Activated CD4-positive, alpha-beta memory T cell treated with anti-CD3 and anti-CD28 coated beads for 36 hours (primary cell): ENCODE measurements at regions of chr20 and their contacts with region 1.

Region 1: GRCh38 chr20:32535953-32536823 is 48.9 kb downstream of the NOL4L start:
- DNase-seq: peak; percentile 84
- H3K4me3 Mint-ChIP-seq: peak overlapping the region; percentile 72
- H3K27ac Mint-ChIP-seq: peak overlapping the region; percentile 89
- H3K4me1 Mint-ChIP-seq: peaks cover 74% of the 10 kb centered on the region
- H3K27me3 Mint-ChIP-seq: no peaks in the 10 kb centered on the region

Region 2: DNA sequence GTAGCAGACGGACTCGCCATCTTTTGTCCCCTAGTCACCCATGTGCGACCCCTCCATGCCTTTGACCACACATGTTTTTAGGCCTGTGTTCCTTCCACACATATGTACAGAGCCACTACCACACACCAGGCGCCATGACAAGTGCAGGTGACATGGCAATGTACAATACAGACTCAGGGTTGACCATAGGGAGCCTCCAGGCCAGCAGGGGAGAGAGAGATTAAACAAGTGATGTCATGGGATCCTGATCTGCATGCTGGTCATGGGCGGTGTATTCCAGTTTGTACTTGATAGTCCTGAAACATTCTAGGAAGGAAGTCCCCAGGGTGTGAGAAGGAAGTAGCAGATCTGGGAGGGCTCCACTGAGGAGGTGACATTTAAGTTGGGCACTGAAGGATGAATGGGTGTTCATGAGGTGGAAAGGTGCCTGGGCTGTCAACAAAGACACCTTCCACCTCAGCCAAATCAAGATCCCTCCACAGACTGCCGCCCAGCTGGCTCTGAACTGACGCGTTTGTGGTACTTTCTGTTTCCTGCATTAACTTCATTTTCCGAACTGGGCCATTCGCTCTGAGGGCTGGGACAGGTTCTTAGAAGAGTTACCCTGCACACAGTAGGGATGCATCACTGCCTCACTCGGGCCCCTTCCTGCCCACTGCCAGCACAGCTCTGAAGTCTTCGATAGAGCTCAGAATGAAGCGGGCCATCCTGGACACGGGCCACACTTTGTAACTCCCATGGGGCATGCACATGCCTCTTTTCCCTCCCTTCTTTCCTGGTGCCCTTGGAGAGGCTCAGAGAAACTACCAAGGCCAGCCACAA is 45.0 kb before region 1 on chr20:
- CTCF ChIA-PET with region 1: no interaction called
- POLR2A ChIA-PET with region 1: no interaction called
- intact Hi-C with region 1: no loop called
- DNase-seq: no peak
- H3K4me3 Mint-ChIP-seq: no peak overlapping the region
- H3K27ac Mint-ChIP-seq: no peak overlapping the region
- H3K4me1 Mint-ChIP-seq: peaks cover 10% of the 10 kb centered on the region
- H3K27me3 Mint-ChIP-seq: no peaks in the 10 kb centered on the region

Region 3: DNA sequence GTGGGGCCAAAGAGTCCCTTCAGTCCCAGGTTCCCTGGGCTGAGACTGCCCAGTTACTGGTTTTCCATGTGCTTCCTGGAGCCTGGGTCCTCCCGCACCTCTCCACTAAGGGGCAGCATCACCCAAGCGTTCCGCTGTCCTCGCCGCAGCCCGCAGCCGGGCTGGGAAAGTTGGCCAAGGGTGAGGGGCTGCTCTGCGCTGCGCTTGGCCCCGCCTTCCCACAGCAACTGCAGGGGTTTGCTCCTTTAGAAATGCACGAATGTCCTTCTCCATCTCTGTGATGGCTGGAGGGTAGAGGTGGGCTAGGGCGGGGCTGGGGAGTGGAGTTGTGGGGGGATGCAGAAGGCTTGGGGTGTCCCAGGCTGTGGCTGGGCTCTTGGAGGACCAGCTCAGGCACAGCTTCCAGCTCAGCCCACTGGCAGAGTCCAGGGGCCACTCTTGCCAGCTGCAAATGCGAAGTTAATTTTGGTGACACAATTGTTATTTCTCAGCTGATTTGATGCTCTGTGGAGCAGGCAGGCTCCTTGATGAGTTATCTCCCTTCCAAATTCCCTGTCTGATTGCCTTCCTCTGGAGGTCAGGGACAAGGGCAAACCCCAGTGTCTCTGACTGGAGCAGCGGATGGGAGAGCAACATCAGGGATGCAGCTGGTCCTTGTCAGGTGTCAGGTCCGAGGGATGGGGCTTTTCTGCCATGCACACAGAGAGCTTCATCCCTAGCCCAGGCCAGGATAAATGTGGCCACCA is 14.2 kb before region 1 on chr20:
- CTCF ChIA-PET with region 1: interaction called, 74 read pairs
- POLR2A ChIA-PET with region 1: interaction called, 6 read pairs
- intact Hi-C with region 1: loop called (anchors 2 kb)
- DNase-seq: peak; percentile 78
- H3K4me3 Mint-ChIP-seq: no peak overlapping the region
- H3K27ac Mint-ChIP-seq: peak overlapping the region; percentile 58
- H3K4me1 Mint-ChIP-seq: peaks cover 47% of the 10 kb centered on the region
- H3K27me3 Mint-ChIP-seq: no peaks in the 10 kb centered on the region

Region 4: GRCh38 chr20:32553618-32554017 is 17.4 kb after region 1 on chr20:
- CTCF ChIA-PET with region 1: interaction called, 4 read pairs
- POLR2A ChIA-PET with region 1: interaction called, 4 read pairs
- intact Hi-C with region 1: loop called (anchors 2 kb)
- DNase-seq: no peak
- H3K4me3 Mint-ChIP-seq: no peak overlapping the region
- H3K27ac Mint-ChIP-seq: peak overlapping the region; percentile 64
- H3K4me1 Mint-ChIP-seq: peaks cover 60% of the 10 kb centered on the region
- H3K27me3 Mint-ChIP-seq: no peaks in the 10 kb centered on the region

Region 5: DNA sequence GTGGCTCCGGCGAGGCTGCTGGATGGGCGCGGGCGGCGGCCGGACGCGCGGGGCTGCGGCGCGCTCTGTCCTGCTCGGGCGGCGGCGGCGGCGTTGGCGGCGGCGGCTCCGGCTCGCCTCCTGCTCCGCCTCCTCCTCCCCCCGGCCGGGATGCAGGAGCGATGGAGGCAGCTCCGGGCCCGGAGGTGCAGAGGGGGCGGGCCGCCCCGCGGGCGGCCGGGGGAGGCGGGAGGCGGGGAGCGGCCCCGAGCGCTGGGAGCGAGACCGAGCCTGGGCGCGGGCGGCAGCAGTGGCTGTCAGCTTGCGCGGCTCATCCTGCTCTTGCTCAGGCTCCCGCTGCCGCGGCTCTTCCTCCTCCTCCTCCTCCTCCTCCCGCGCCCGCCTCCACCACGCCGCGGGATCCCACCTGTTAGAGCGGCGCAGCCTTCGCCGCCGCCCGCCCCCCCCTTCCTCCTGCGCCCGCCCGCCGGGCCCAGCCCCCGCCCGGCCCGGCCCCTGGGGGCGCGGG is 48.9 kb after region 1 on chr20 and contains the start of gene NOL4L:
- CTCF ChIA-PET with region 1: interaction called, 4 read pairs
- POLR2A ChIA-PET with region 1: interaction called, 3 read pairs
- intact Hi-C with region 1: loop called (anchors 1 kb)
- DNase-seq: peak; percentile 58
- H3K4me3 Mint-ChIP-seq: peak within 1 kb of the TSS; percentile 78
- H3K27ac Mint-ChIP-seq: peak within 1 kb of the TSS; percentile 56
- H3K4me1 Mint-ChIP-seq: peaks cover 31% of the 10 kb centered on the region
- H3K27me3 Mint-ChIP-seq: peaks cover 3% of the 10 kb centered on the region
- total RNA-seq, gene NOL4L: 21.8 to 22.1 TPM

Region 6: GRCh38 chr20:32652739-32653526 is 116.7 kb after region 1 on chr20:
- CTCF ChIA-PET with region 1: interaction called, 341 read pairs
- POLR2A ChIA-PET with region 1: no interaction called
- intact Hi-C with region 1: no loop called
- DNase-seq: peak; percentile 92
- H3K4me3 Mint-ChIP-seq: no peak overlapping the region
- H3K27ac Mint-ChIP-seq: peak overlapping the region; percentile 13
- H3K4me1 Mint-ChIP-seq: peaks cover 9% of the 10 kb centered on the region
- H3K27me3 Mint-ChIP-seq: no peaks in the 10 kb centered on the region

Region 7: GRCh38 chr20:32743237-32744112 is 207.3 kb after region 1 on chr20 and contains the start of gene COMMD7:
- CTCF ChIA-PET with region 1: no interaction called
- POLR2A ChIA-PET with region 1: interaction called, 4 read pairs
- intact Hi-C with region 1: loop called (anchors 10 kb)
- DNase-seq: peak; percentile 90
- H3K4me3 Mint-ChIP-seq: peak within 1 kb of the TSS; percentile 97
- H3K27ac Mint-ChIP-seq: peak within 1 kb of the TSS; percentile 94
- H3K4me1 Mint-ChIP-seq: peaks cover 30% of the 10 kb centered on the region
- H3K27me3 Mint-ChIP-seq: no peaks in the 10 kb centered on the region
- total RNA-seq, gene COMMD7: 38.1 to 39.6 TPM